T-cell (primary cell): ENCODE measurements at regions of chr1 and their contacts with region 1.

Region 1: GRCh38 chr1:204791453-204792353 is 79.0 kb upstream of the NFASC start:
- DNase-seq: peak; percentile 48 to 87 (median 77)
- ATAC-seq: peak; percentile 76 to 93 (median 78)
- H3K4me3 ChIP-seq: no peak overlapping the region
- H3K4me3 Mint-ChIP-seq: no peak overlapping the region
- H3K27ac ChIP-seq: no peak overlapping the region
- H3K27ac Mint-ChIP-seq: no peak overlapping the region
- H3K4me1 ChIP-seq: no peaks in the 10 kb centered on the region
- H3K4me1 Mint-ChIP-seq: peaks cover 0 to 9% (median 5%) of the 10 kb centered on the region in 3 donors
- H3K27me3 ChIP-seq: peaks cover 0 to 26% of the 10 kb centered on the region in 2 experiments
- H3K27me3 Mint-ChIP-seq: peaks cover 29 to 34% of the 10 kb centered on the region in 2 donors

Region 2: GRCh38 chr1:204583906-204584632 is 207.6 kb before region 1 on chr1:
- CTCF ChIA-PET with region 1: interaction called in 1 of 2 experiments, 11 read pairs
- POLR2A ChIA-PET with region 1: no interaction called
- DNase-seq: no peak
- ATAC-seq: no peak
- H3K4me3 ChIP-seq: no peak overlapping the region
- H3K4me3 Mint-ChIP-seq: no peak overlapping the region
- H3K27ac ChIP-seq: peak overlapping the region; percentile 32
- H3K27ac Mint-ChIP-seq: peak overlapping the region; percentile 28 to 49
- H3K4me1 ChIP-seq: peaks cover 0 to 33% of the 10 kb centered on the region in 2 experiments
- H3K4me1 Mint-ChIP-seq: peaks cover 12 to 34% (median 23%) of the 10 kb centered on the region in 3 donors
- H3K27me3 ChIP-seq: no peaks in the 10 kb centered on the region
- H3K27me3 Mint-ChIP-seq: no peaks in the 10 kb centered on the region

Region 3: GRCh38 chr1:204780630-204781029 is 11.1 kb before region 1 on chr1:
- CTCF ChIA-PET with region 1: interaction called in 1 of 2 experiments, 10 read pairs
- POLR2A ChIA-PET with region 1: no interaction called
- DNase-seq: no peak
- ATAC-seq: no peak
- H3K4me3 ChIP-seq: no peak overlapping the region
- H3K4me3 Mint-ChIP-seq: no peak overlapping the region
- H3K27ac ChIP-seq: no peak overlapping the region
- H3K27ac Mint-ChIP-seq: no peak overlapping the region
- H3K4me1 ChIP-seq: no peaks in the 10 kb centered on the region
- H3K4me1 Mint-ChIP-seq: no peaks in the 10 kb centered on the region
- H3K27me3 ChIP-seq: peaks cover 0 to 7% of the 10 kb centered on the region in 2 experiments
- H3K27me3 Mint-ChIP-seq: peaks cover 12 to 18% of the 10 kb centered on the region in 2 donors